Activated CD4-positive, alpha-beta T cell treated with anti-CD3 and anti-CD28 coated beads for 36 hours (primary cell): ENCODE measurements at regions of chr19 and their contacts with region 1.

Region 1: GRCh38 chr19:29941828-29942403 is at the start of gene URI1:
- DNase-seq: peak; percentile 97
- ATAC-seq: peak; percentile 82
- H3K4me3 Mint-ChIP-seq: peak within 1 kb of the TSS; percentile 96
- H3K27ac Mint-ChIP-seq: peak within 1 kb of the TSS; percentile 95
- H3K4me1 Mint-ChIP-seq: peaks cover 41% of the 10 kb centered on the region
- H3K27me3 Mint-ChIP-seq: no peaks in the 10 kb centered on the region
- total RNA-seq, gene URI1: 61.3 to 69.7 TPM

Region 2: GRCh38 chr19:29212648-29213573 is 729.0 kb before region 1 on chr19 and contains the start of gene UQCRFS1:
- CTCF ChIA-PET with region 1: no interaction called
- POLR2A ChIA-PET with region 1: no interaction called
- intact Hi-C with region 1: loop called in 1 of 2 experiments (anchors 2 kb)
- DNase-seq: peak; percentile 98
- ATAC-seq: peak; percentile 98
- H3K4me3 Mint-ChIP-seq: peak within 1 kb of the TSS; percentile 95
- H3K27ac Mint-ChIP-seq: peak within 1 kb of the TSS; percentile 95
- H3K4me1 Mint-ChIP-seq: peaks cover 48% of the 10 kb centered on the region
- H3K27me3 Mint-ChIP-seq: peaks cover 3% of the 10 kb centered on the region
- total RNA-seq, gene UQCRFS1: 39.1 to 45.3 TPM

Region 3: GRCh38 chr19:29665215-29665825 is 276.6 kb before region 1 on chr19 and contains the start of gene PLEKHF1:
- CTCF ChIA-PET with region 1: no interaction called
- POLR2A ChIA-PET with region 1: no interaction called
- intact Hi-C with region 1: loop called in 1 of 2 experiments (anchors 1 kb)
- DNase-seq: peak; percentile 92
- ATAC-seq: peak; percentile 76
- H3K4me3 Mint-ChIP-seq: peak within 1 kb of the TSS; percentile 87
- H3K27ac Mint-ChIP-seq: peak within 1 kb of the TSS; percentile 96
- H3K4me1 Mint-ChIP-seq: peaks cover 71% of the 10 kb centered on the region
- H3K27me3 Mint-ChIP-seq: no peaks in the 10 kb centered on the region
- total RNA-seq, gene PLEKHF1: 25.4 to 26.6 TPM

Region 4: DNA sequence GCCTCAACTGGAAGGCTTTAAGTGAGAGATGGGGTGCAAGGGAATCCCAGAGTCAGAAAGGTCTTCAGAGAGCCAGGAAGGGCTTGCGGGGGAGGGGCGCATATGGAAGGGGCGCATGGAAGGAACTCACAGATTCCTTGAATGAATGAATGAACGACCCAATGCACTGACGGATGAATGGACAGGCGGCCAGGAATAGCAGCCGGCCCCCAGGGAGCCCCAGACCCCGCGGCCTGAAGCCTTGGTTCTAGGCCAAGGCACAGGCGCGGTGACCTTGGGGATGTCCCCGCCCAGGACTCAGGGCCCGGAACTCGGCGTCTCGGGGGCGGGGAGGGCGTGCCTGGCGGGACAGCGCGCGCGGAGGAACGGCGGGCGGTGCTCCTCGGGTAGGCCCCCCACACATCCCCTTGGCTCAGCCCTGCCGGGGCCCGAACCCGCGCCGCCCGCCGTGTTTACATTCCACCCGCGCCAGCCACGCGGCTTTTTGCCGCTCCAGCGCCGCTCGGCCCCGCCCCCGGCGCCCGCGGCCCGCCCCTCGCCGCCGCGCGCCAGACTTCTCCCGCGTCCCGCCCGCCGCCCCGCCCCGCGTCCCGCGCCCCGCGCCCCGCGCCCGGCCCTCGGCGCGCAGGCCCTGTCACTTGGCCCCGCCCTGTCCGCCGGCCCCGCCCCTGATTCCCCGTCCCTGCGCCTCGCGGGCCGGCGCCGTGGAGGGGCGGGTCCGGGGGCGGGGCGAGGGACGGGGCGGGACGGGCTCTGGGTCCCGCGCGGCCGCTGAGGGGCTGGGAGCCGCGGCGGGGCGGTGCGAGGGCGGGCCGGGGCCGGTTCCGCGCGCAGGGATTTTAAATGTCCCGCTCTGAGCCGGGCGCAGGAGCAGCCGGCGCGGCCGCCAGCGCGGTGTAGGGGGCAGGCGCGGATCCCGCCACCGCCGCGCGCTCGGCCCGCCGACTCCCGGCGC is 130.5 kb before region 1 on chr19 and contains the start of gene CCNE1:
- CTCF ChIA-PET with region 1: interaction called, 3 read pairs
- POLR2A ChIA-PET with region 1: no interaction called
- intact Hi-C with region 1: loop called in 1 of 2 experiments (anchors 1 kb)
- DNase-seq: peak; percentile 98
- ATAC-seq: peak; percentile 93
- H3K4me3 Mint-ChIP-seq: peak within 1 kb of the TSS; percentile 88
- H3K27ac Mint-ChIP-seq: peak within 1 kb of the TSS; percentile 94
- H3K4me1 Mint-ChIP-seq: peaks cover 15% of the 10 kb centered on the region
- H3K27me3 Mint-ChIP-seq: no peaks in the 10 kb centered on the region
- total RNA-seq, gene CCNE1: 29.4 to 30.4 TPM

Region 5: DNA sequence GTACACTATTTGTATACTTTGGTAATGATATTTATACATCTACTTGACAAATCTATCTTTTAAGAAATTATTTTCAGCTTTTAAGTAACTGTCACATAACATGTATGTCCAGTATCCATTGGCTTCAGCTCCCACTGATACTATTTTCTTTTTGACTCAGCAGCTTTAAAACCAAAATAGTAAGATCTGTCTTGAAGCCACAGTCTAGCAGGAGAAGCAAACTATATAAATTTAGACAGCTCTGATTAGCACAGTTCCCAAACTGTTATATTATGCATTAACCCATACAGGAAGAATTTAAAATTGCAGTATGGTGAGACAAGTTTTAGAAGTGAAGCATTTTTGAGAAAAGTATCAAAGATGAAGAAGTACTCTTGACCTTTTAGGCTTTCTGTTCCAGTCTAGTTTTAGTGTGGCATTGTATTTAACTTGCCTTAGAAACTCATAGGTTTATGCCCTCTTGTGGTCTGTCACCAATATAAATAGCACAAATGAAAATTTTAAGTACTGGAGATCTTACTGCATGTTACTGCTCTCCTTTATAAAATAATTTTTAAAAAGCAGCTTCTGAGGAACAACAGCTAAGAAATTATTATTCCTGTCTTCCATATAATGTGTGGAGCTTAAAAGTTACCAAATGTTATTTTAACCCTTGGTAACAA is 24.8 kb after region 1 on chr19:
- CTCF ChIA-PET with region 1: interaction called, 13 read pairs
- POLR2A ChIA-PET with region 1: interaction called, 4 read pairs
- intact Hi-C with region 1: no loop called
- DNase-seq: no peak
- ATAC-seq: no peak
- H3K4me3 Mint-ChIP-seq: no peak overlapping the region
- H3K27ac Mint-ChIP-seq: no peak overlapping the region
- H3K4me1 Mint-ChIP-seq: peaks cover 77% of the 10 kb centered on the region
- H3K27me3 Mint-ChIP-seq: no peaks in the 10 kb centered on the region

Region 6: GRCh38 chr19:30227661-30228428 is 285.9 kb after region 1 on chr19:
- CTCF ChIA-PET with region 1: no interaction called
- POLR2A ChIA-PET with region 1: no interaction called
- intact Hi-C with region 1: loop called in 1 of 2 experiments (anchors 10 kb)
- DNase-seq: peak; percentile 83
- ATAC-seq: peak; percentile 82
- H3K4me3 Mint-ChIP-seq: peak overlapping the region; percentile 73
- H3K27ac Mint-ChIP-seq: no peak overlapping the region
- H3K4me1 Mint-ChIP-seq: peaks cover 27% of the 10 kb centered on the region
- H3K27me3 Mint-ChIP-seq: peaks cover 64% of the 10 kb centered on the region